Activated CD4-positive, alpha-beta memory T cell treated with anti-CD3 and anti-CD28 coated beads for 36 hours (primary cell): ENCODE measurements at regions of chr16 and their contacts with region 1.

Region 1: DNA sequence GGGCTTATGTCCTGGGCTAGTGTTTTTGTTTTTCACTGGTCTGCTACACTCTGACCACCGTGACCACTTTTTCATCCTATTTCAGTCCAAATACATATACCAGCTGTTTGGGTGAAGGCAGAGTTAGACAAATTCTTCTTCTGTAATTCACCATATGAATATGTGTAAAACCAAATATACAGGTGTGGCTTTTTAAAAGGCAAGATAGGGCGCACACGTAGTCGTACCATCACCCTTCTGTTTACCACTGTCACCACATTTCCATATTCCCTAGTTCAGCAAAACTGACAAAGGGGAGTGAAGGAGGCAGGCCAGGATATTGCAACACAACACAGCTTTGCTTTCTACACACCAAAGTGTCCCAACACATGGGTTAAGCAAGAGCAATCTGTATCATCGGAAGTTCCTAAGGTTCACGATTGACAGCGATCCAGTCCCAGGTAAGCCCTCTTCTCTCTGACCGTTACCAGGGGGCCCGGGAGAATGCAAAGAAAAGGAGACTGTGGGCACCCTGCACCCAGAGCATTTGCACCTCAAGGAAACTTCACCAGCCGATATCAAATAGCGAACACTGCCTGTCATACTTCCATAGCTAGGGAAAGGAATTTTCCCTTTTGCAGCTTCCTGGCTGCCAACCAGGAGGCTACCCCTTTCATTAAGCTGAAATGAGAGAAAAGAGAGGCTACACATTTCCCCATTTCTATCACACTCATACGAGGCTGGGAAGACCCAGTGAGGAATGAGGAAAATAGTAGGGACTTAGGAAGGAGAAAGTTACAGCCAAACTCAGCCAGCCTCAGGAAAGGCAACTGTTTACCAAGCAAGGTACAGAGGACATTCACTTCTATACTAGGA is 23.1 kb downstream of the CREBBP start:
- DNase-seq: peak; percentile 22
- H3K4me3 Mint-ChIP-seq: no peak overlapping the region
- H3K27ac Mint-ChIP-seq: no peak overlapping the region
- H3K4me1 Mint-ChIP-seq: peaks cover 76% of the 10 kb centered on the region
- H3K27me3 Mint-ChIP-seq: no peaks in the 10 kb centered on the region

Region 2: DNA sequence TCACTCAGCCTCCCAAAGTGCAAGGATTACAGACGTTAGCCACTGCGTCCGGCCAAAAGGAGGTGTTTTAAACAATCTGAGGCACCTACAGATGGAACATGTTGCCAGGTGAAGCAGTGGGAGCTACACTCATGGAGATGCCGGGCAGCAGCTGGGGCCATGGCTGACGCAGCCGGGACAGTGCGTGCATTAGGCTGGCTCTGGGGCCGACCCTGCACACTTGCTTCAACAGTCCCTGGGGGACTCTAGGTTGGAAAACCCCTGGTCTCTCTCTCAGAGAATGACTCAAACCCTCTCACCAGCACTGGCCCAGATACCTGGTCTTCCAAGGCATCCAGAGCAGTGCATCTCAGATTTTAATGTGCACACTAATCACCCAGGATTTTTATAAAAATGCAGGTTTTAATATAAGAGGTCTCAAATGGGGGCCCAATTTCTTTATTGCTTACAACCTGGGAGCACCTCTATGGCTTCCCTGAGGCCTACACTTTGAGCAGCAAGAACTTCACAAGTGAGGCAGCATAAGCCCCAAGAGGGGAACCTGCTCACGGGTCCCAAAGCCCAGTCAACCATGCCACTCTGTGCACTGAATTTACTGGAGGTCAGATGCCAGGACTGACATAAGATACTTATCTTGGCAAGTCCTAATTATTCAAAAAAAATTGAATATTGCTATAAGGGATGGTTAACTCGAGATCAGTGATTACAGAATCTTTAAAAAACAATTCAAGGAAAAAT is 69.3 kb before region 1 on chr16:
- CTCF ChIA-PET with region 1: no interaction called
- POLR2A ChIA-PET with region 1: no interaction called
- intact Hi-C with region 1: loop called (anchors 5 kb)
- DNase-seq: no peak
- H3K4me3 Mint-ChIP-seq: no peak overlapping the region
- H3K27ac Mint-ChIP-seq: no peak overlapping the region
- H3K4me1 Mint-ChIP-seq: peaks cover 27% of the 10 kb centered on the region
- H3K27me3 Mint-ChIP-seq: no peaks in the 10 kb centered on the region

Region 3: DNA sequence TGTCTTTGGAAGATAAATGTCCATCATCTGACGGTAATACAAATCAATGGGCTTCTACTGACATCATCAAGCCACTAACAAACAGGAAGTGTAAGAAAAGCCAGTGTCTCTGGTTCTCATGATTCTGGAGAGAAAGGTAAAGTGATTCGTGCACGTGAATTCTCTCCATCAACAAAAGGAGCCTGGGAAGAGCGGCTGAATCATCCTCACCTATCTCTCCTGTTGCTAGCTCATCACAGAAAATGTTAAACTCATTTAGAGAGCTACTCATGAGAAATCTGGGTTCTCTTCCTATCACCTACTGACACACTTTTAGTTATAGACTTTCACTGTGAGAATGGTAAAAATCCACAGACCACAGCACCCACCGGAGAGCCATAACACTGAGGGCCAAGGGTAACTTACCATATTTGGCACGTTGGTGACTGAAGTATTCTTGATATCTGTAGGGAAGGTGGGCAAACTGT is 47.2 kb before region 1 on chr16:
- CTCF ChIA-PET with region 1: no interaction called
- POLR2A ChIA-PET with region 1: no interaction called
- intact Hi-C with region 1: loop called (anchors 5 kb)
- DNase-seq: peak; percentile 68
- H3K4me3 Mint-ChIP-seq: no peak overlapping the region
- H3K27ac Mint-ChIP-seq: no peak overlapping the region
- H3K4me1 Mint-ChIP-seq: peaks cover 78% of the 10 kb centered on the region
- H3K27me3 Mint-ChIP-seq: no peaks in the 10 kb centered on the region

Region 4: DNA sequence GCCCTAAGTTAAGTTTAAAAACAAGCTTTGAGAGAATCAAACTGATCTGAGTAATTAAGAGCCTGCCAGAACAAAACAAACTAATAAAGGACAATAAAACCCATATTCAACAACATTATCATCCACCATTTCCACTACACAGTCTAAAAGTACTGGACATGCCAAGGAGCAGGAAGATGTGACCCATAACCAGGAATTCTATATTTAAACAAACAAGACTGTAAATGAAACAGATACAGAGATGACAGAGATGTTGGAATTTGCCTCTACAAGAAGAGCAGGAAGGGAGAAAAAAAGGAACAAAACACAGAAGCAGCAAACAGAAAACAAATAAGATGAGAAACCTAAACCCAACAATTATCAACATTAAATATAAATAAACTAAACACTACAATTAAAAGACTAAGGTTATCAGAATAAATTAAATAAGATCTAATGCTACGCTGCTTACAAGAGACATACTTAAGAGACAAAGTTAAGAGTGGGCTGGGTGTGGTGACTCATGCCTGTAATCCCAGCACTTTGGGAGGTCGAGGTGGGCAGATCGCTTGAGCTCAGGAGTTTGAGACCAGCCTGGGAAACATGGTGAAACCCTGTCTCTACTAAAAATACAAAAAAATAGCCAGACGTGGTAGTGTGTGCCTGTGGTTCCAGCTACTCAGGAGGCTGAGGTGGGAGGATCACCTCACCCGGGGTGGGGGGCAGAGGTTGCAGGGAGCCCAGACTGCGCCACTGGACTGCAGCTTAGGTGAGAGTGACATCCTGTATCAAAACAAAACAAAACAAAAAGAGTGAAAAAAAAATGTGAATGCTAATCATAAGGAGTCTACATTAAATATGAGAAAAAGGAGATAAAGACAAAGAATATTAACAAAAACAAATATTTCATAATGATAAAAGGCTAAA is 27.5 kb before region 1 on chr16:
- CTCF ChIA-PET with region 1: no interaction called
- POLR2A ChIA-PET with region 1: no interaction called
- intact Hi-C with region 1: no loop called
- DNase-seq: no peak
- H3K4me3 Mint-ChIP-seq: no peak overlapping the region
- H3K27ac Mint-ChIP-seq: no peak overlapping the region
- H3K4me1 Mint-ChIP-seq: peaks cover 45% of the 10 kb centered on the region
- H3K27me3 Mint-ChIP-seq: no peaks in the 10 kb centered on the region

Region 5: DNA sequence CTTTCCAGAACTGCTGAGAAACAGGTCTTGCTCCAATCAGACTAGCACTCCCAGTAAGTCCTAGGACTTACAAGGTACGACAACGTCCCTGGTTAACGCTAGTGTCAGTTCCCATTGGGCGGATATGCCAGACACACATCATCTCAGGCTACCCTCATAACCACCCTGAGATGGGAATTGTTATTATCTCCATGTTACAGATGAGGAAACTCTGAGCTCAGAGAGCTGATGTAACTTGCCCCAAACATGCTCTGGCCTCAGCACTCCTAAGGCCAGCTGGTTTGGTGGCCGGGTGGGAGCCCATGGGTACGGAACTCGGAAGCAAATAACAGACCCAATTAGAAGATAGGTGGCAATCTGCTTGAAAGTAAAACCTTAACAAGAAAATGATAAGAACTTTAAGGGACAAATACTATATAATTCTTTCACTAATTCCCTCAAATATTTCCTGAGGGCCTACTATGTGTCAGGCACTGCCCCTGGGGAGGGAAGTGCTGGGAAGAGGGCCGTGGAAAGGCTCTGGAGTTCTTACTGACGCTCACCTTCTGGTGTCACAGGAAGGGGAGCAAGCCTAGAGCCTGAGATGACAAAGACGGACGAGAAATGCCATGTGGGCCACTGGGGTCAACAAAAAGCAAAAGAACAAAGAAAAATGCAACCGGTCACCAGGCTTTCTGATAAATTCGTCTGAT is 16.2 kb after region 1 on chr16:
- CTCF ChIA-PET with region 1: no interaction called
- POLR2A ChIA-PET with region 1: no interaction called
- intact Hi-C with region 1: no loop called
- DNase-seq: no peak
- H3K4me3 Mint-ChIP-seq: no peak overlapping the region
- H3K27ac Mint-ChIP-seq: no peak overlapping the region
- H3K4me1 Mint-ChIP-seq: peaks cover 96% of the 10 kb centered on the region
- H3K27me3 Mint-ChIP-seq: no peaks in the 10 kb centered on the region